ENCODE measurements at regions of chr4 and their contacts with region 1.

Region 1: GRCh38 chr4:112145326-112145819 is at the start of gene FAM241A:
- DNase-seq: peak; percentile 79 to 93 (median 90)
- ATAC-seq: peak; percentile 94
- H3K4me3 ChIP-seq: peak within 1 kb of the TSS; percentile 70
- H3K4me3 Mint-ChIP-seq: peak within 1 kb of the TSS; percentile 93
- H3K27ac ChIP-seq: peak within 1 kb of the TSS; percentile 27 to 73
- H3K27ac Mint-ChIP-seq: peak within 1 kb of the TSS; percentile 85
- H3K4me1 ChIP-seq: peaks cover 6% of the 10 kb centered on the region
- H3K4me1 Mint-ChIP-seq: peaks cover 35% of the 10 kb centered on the region
- H3K27me3 ChIP-seq: no peaks in the 10 kb centered on the region
- H3K27me3 Mint-ChIP-seq: no peaks in the 10 kb centered on the region
- CTCF ChIP-seq: no peak
- total RNA-seq, gene FAM241A: 0.74 to 1.1 TPM

Region 2: GRCh38 chr4:112183252-112183651 is 37.9 kb after region 1 on chr4:
- CTCF ChIA-PET with region 1: no interaction called
- POLR2A ChIA-PET with region 1: interaction called, 3 read pairs
- intact Hi-C with region 1: loop called in 1 of 2 experiments (anchors 2 kb)
- DNase-seq: peak in 3 of 14 experiments; percentile 38 to 44 (median 39)
- ATAC-seq: peak; percentile 85
- H3K4me3 ChIP-seq: no peak overlapping the region
- H3K4me3 Mint-ChIP-seq: peak overlapping the region; percentile 57
- H3K27ac ChIP-seq: peak overlapping the region in 1 of 2 donors; percentile 39
- H3K27ac Mint-ChIP-seq: peak overlapping the region; percentile 80
- H3K4me1 ChIP-seq: no peaks in the 10 kb centered on the region
- H3K4me1 Mint-ChIP-seq: peaks cover 52% of the 10 kb centered on the region
- H3K27me3 ChIP-seq: no peaks in the 10 kb centered on the region
- H3K27me3 Mint-ChIP-seq: no peaks in the 10 kb centered on the region
- CTCF ChIP-seq: no peak

Region 3: DNA sequence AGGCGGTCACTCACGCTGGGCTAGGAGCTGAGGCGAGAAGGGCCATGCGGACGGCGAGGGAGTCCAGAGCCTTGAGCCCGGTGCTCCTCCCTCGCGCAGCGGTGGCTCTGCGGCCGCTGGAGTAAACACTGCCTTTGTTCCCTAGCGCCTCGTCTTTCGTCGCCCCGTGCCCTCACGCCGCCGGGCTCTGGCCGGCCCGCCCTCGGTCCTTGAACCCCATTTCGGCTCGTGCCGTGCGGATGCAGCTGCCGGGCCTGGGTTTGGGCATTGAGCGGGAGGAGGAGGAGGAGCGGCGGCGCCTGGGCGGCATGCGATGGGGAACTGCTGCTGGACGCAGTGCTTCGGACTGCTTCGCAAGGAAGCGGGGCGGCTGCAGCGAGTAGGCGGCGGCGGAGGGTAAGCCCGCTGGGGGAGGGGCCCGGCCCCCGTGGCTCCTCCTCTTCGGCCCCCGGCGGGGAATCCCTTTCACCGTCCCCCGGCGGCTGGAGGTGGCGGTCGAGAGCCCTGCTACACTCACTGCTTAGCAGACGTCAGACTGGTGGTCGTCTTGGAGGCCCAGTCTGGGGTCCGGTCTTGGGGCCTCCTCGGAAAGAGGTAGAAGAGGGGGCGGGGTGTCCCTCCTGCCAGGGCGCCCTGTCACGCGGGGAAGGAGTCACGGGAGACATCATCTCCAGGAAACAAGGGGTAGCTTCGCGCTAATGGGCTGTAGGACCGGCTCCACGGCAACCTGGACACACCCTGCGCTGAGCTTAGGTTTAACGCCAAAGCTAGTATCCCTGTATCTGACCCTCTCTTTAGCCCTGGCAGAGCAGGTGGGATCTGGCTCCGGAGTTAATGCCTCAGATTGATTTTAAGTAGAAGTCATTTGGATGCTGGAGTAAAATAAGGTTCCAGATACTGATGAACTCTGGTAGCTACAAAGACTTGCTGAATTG is 86.7 kb after region 1 on chr4 and contains the start of gene AP1AR:
- CTCF ChIA-PET with region 1: interaction called, 4 read pairs
- POLR2A ChIA-PET with region 1: interaction called, 16 read pairs
- intact Hi-C with region 1: loop called (anchors 1 to 2 kb)
- DNase-seq: peak; percentile 53 to 90 (median 69)
- ATAC-seq: peak; percentile 50
- H3K4me3 ChIP-seq: peak within 1 kb of the TSS; percentile 93
- H3K4me3 Mint-ChIP-seq: peak within 1 kb of the TSS; percentile 99
- H3K27ac ChIP-seq: peak within 1 kb of the TSS; percentile 93 to 96
- H3K27ac Mint-ChIP-seq: peak within 1 kb of the TSS; percentile 98
- H3K4me1 ChIP-seq: peaks cover 13% of the 10 kb centered on the region
- H3K4me1 Mint-ChIP-seq: peaks cover 55% of the 10 kb centered on the region
- H3K27me3 ChIP-seq: no peaks in the 10 kb centered on the region
- H3K27me3 Mint-ChIP-seq: no peaks in the 10 kb centered on the region
- CTCF ChIP-seq: no peak
- total RNA-seq, gene AP1AR: 3.7 to 4.8 TPM

Measured in CD4-positive, alpha-beta T cell (primary cell).